ENCODE measurements at regions of chr5 and their contacts with region 1.

Region 1: DNA sequence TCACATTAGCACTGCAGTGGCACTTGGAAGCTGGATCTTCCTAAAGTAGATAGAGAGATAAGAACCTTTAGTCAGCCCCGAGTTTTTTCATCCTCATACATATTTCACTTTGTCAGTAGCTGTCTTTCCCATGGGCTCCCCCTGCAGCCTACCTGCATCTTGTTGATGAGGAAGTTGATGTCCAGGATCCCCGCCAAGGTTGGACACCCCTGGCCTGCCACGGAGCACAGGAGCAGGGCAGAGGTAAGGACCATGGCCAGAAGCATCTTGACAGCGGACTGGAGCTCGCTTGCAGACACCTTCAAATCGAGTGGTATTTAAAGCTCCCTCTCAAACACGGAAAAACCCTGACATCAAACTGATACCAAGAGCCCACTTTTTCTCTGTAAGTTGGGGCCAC is at the start of gene IL9:
- DNase-seq: no peak
- H3K4me3 ChIP-seq: no peak within 1 kb of the TSS
- H3K27ac ChIP-seq: no peak within 1 kb of the TSS
- H3K4me1 ChIP-seq: no peaks in the 10 kb centered on the region
- H3K27me3 ChIP-seq: peaks cover 0 to 6% of the 10 kb centered on the region in 2 donors
- CTCF ChIP-seq: no peak
- POLR2A ChIP-seq: no peak
- total RNA-seq, gene IL9: not detected

Region 2: DNA sequence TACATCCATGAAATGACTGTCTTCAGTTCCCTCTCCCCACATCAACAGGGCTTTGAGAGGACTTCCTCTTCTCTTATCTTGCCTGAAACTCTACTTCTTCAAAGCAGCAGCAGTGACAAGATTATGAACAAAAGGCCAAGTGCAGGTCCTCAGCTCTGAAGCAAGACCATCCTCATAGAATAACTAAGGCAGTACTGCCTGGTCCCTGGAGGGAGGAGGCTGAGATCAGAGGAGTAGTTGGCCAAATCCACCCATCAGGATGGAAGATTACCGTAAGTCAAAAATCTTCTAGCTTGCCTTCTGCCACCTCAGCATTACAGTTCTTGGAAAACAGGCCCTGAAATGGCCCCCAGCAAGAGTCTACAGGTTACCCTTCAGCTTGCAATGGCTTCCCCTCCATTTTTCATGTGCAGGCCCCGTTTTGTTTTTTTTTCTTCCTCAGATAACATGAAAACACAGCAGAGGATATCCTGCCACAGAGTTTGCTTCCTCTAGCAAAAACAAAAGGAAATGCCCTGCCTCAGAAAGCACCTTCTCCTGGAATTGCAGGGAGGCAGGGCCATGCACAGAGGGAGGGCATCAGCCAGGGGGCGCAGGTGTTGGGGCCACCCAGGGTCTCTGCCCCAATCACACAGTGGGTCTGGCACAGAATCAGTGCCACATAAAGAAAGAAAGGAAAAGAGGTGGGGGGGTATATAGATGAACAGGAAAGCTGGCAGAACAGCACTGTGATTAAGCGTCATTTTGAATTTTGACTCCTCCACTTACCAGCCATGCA is 1800.3 kb after region 1 on chr5:
- intact Hi-C with region 1: loop called (anchors 5 kb)
- DNase-seq: no peak
- H3K4me3 ChIP-seq: no peak overlapping the region
- H3K27ac ChIP-seq: peak overlapping the region in 1 of 2 donors; percentile 32
- H3K4me1 ChIP-seq: no peaks in the 10 kb centered on the region
- H3K27me3 ChIP-seq: no peaks in the 10 kb centered on the region
- CTCF ChIP-seq: no peak
- POLR2A ChIP-seq: no peak